ENCODE measurements at regions of chr22 and their contacts with region 1.

Region 1: DNA sequence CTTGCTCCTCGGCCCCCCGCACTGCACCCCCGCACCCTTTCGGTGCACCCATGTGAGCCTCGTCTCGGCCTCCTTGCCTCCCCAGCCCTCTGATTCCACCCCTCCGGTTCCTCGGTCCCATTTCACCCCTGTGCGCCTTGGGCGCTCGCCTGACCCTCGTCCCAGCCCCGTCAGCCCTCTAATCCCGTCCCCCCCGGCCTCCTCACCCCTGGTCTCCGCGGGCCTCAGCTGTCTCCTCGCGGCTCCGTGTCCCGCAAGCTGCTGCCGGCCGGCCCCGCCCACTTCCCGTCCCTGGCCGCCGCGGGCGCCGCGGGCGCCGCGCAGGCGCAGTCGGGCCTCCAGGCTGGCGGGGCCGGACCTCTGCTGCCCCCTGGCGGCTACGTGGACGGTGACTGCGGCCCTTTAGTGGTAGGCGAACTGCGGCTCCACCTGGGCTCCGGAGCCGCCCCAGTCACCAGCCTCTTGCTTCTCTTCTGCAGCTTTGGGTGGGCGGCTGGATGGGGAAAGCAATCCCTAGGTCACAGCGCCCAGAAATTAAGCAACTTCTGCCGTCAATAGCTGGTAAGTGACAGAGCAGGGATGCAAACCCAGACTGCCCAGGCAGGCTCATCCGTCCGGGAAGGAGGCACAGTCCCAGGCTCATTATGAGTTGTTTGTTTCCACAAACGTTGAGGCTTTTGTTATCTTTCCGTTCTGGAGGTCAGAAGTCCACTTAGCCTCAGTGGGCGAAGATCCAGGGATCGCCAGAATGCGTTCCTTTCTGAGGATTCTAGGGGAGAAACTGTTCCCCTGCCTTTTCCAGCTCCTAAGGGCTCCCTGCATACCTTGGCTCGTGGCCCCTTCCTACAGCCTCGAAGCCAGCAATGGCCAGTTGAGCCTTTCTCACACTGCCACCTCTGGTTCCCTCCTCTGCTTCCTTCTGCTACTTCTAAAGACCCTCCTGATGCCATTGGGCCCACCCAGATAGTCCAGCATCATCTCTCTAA is at the start of gene PPM1F:
- DNase-seq: peak; percentile 55
- ATAC-seq: peak; percentile 83
- H3K4me3 ChIP-seq: peak within 1 kb of the TSS; percentile 86
- H3K27ac ChIP-seq: peak within 1 kb of the TSS; percentile 92
- H3K4me1 ChIP-seq: peaks cover 7% of the 10 kb centered on the region; the same call in 1 of the 2 replicates
- H3K27me3 ChIP-seq: no peaks in the 10 kb centered on the region
- CTCF ChIP-seq: peak; percentile 91
- POLR2A ChIP-seq: 0 out of 2 replicates have a peak, but pooled peaks have one; percentile 16
- RAD21 ChIP-seq: peak; percentile 70
- total RNA-seq, gene PPM1F: 20.8 and 25.0 TPM in 2 replicates

Region 2: GRCh38 chr22:21712894-21713712 is 239.8 kb before region 1 on chr22:
- CTCF ChIA-PET with region 1: interaction called, 5 read pairs
- POLR2A ChIA-PET with region 1: no interaction called
- dilution Hi-C with region 1: no loop called
- in situ Hi-C with region 1: no loop called
- intact Hi-C with region 1: loop called (anchors 5 kb)
- DNase-seq: peak; percentile 78
- ATAC-seq: peak; percentile 98
- H3K4me3 ChIP-seq: no peak overlapping the region
- H3K27ac ChIP-seq: no peak overlapping the region
- H3K4me1 ChIP-seq: peaks cover 3% of the 10 kb centered on the region
- H3K27me3 ChIP-seq: no peaks in the 10 kb centered on the region
- CTCF ChIP-seq: peak; percentile 86
- POLR2A ChIP-seq: 0 out of 2 replicates have a peak, but pooled peaks have one; percentile 42
- RAD21 ChIP-seq: peak; percentile 91

Region 3: GRCh38 chr22:21876486-21877176 is 76.2 kb before region 1 on chr22:
- CTCF ChIA-PET with region 1: no interaction called
- POLR2A ChIA-PET with region 1: no interaction called
- dilution Hi-C with region 1: no loop called
- in situ Hi-C with region 1: no loop called
- intact Hi-C with region 1: no loop called
- DNase-seq: peak; percentile 68
- ATAC-seq: peak; percentile 44
- H3K4me3 ChIP-seq: no peak overlapping the region
- H3K27ac ChIP-seq: no peak overlapping the region
- H3K4me1 ChIP-seq: no peaks in the 10 kb centered on the region
- H3K27me3 ChIP-seq: no peaks in the 10 kb centered on the region
- CTCF ChIP-seq: no peak
- POLR2A ChIP-seq: no peak
- RAD21 ChIP-seq: no peak

Region 4: GRCh38 chr22:21904250-21904789 is 48.6 kb before region 1 on chr22:
- CTCF ChIA-PET with region 1: no interaction called
- POLR2A ChIA-PET with region 1: no interaction called
- dilution Hi-C with region 1: no loop called
- in situ Hi-C with region 1: no loop called
- intact Hi-C with region 1: no loop called
- DNase-seq: no peak
- ATAC-seq: no peak
- H3K4me3 ChIP-seq: no peak overlapping the region
- H3K27ac ChIP-seq: no peak overlapping the region
- H3K4me1 ChIP-seq: no peaks in the 10 kb centered on the region
- H3K27me3 ChIP-seq: no peaks in the 10 kb centered on the region
- CTCF ChIP-seq: no peak
- POLR2A ChIP-seq: no peak
- RAD21 ChIP-seq: no peak

Region 5: DNA sequence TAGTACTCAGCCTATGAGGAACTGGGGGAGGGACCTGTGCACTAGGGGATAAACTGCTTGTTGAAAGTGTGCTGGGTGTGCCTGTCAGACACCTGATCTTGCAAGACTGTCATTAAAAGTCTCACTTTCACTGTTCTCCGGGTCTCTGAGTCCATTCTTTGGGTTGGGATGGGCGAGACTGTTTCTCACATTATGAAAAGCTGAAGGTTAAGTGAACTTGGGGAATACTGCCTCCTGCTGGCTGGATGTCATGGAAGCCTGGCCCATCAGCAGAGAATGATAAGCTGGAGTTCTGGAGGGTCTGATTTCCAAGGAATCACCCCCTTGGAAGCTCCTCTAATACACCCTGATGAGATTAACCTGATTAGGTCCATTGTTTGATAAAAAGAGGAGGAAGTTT is 282.7 kb after region 1 on chr22:
- CTCF ChIA-PET with region 1: no interaction called
- POLR2A ChIA-PET with region 1: no interaction called
- dilution Hi-C with region 1: no loop called
- in situ Hi-C with region 1: no loop called
- intact Hi-C with region 1: no loop called
- DNase-seq: no peak
- ATAC-seq: no peak
- H3K4me3 ChIP-seq: no peak overlapping the region
- H3K27ac ChIP-seq: no peak overlapping the region
- H3K4me1 ChIP-seq: no peaks in the 10 kb centered on the region
- H3K27me3 ChIP-seq: peaks cover 13% of the 10 kb centered on the region
- CTCF ChIP-seq: peak; percentile 40
- POLR2A ChIP-seq: no peak
- RAD21 ChIP-seq: peak; percentile 41

Region 6: GRCh38 chr22:22316589-22316988 is 363.7 kb after region 1 on chr22:
- CTCF ChIA-PET with region 1: no interaction called
- POLR2A ChIA-PET with region 1: no interaction called
- dilution Hi-C with region 1: no loop called
- in situ Hi-C with region 1: no loop called
- intact Hi-C with region 1: no loop called
- DNase-seq: no peak
- ATAC-seq: no peak
- H3K4me3 ChIP-seq: no peak overlapping the region
- H3K27ac ChIP-seq: no peak overlapping the region
- H3K4me1 ChIP-seq: no peaks in the 10 kb centered on the region
- H3K27me3 ChIP-seq: no peaks in the 10 kb centered on the region
- CTCF ChIP-seq: no peak
- POLR2A ChIP-seq: no peak
- RAD21 ChIP-seq: no peak

Measured in IMR-90 (cell line).